A549 (cell line): ENCODE measurements at regions of chr18 and their contacts with region 1.

Region 1: GRCh38 chr18:9673296-9674251 is 34.5 kb upstream of the RAB31 start:
- DNase-seq: peak; percentile 94 to 97
- ATAC-seq: peak; percentile 95 to 99
- H3K4me3 ChIP-seq: peak overlapping the region; percentile 19
- H3K27ac ChIP-seq: peak overlapping the region; percentile 89 to 91
- H3K4me1 ChIP-seq: peaks cover 20% of the 10 kb centered on the region
- CTCF ChIP-seq: peak; percentile 52
- EP300 ChIP-seq: peak in 1 of 2 experiments; percentile 9; a peak in 1 of 5 replicates
- POLR2A ChIP-seq: no peak
- RAD21 ChIP-seq: peak; percentile 73 to 78

Region 2: DNA sequence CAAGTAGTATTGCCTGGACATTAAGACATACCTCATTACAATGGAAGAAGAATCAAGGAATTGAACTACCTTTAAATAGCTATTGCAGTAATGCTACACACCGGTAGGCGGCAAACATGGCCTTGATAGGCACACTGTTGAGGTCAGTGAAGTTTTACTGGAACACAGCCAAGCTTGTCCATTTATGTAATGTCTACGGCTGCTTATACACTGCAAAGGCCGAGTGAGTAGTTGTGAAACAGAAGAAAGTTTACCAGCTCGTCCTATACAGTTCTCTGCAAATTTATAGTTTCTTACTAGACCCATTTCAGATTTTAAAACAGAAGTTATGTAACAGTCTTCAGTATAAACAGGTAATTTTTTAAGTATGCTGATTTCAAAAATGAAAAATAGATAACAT is 98.0 kb before region 1 on chr18:
- CTCF ChIA-PET with region 1: interaction called, 14 read pairs
- POLR2A ChIA-PET with region 1: interaction called, 8 read pairs
- DNase-seq: peak; percentile 44 to 95
- ATAC-seq: peak; percentile 97
- H3K4me3 ChIP-seq: no peak overlapping the region
- H3K27ac ChIP-seq: peak overlapping the region; percentile 12 to 64; a peak in 3 of 6 replicates
- H3K4me1 ChIP-seq: peaks cover 28% of the 10 kb centered on the region
- CTCF ChIP-seq: peak; percentile 64
- EP300 ChIP-seq: no peak
- POLR2A ChIP-seq: no peak
- RAD21 ChIP-seq: peak; percentile 82 to 90

Region 3: DNA sequence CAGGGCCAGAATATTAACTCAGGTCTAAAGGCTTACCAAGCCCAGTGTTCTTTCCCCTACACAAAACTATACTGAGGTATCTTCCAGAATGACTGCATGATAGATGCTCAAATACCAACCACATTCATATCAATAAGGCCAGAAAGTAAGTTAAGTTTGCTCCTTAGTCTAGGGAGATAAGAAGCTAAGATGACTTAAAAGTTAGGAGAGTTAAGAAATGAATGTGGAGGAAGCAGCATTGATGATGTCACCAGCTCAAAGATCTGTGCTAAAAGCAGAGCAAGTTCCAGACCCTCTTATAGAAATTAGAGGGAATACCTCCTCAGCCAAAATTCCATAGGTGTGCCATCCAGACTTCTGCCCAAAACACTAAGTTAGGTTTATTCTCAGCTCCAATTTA is 65.3 kb before region 1 on chr18:
- CTCF ChIA-PET with region 1: interaction called, 22 read pairs
- POLR2A ChIA-PET with region 1: interaction called, 15 read pairs
- DNase-seq: peak in 1 of 2 experiments; percentile 15
- ATAC-seq: no peak
- H3K4me3 ChIP-seq: no peak overlapping the region
- H3K27ac ChIP-seq: peak overlapping the region; percentile 39 to 79; a peak in 4 of 6 replicates
- H3K4me1 ChIP-seq: peaks cover 43% of the 10 kb centered on the region
- CTCF ChIP-seq: no peak
- EP300 ChIP-seq: no peak
- POLR2A ChIP-seq: no peak
- RAD21 ChIP-seq: no peak

Region 4: DNA sequence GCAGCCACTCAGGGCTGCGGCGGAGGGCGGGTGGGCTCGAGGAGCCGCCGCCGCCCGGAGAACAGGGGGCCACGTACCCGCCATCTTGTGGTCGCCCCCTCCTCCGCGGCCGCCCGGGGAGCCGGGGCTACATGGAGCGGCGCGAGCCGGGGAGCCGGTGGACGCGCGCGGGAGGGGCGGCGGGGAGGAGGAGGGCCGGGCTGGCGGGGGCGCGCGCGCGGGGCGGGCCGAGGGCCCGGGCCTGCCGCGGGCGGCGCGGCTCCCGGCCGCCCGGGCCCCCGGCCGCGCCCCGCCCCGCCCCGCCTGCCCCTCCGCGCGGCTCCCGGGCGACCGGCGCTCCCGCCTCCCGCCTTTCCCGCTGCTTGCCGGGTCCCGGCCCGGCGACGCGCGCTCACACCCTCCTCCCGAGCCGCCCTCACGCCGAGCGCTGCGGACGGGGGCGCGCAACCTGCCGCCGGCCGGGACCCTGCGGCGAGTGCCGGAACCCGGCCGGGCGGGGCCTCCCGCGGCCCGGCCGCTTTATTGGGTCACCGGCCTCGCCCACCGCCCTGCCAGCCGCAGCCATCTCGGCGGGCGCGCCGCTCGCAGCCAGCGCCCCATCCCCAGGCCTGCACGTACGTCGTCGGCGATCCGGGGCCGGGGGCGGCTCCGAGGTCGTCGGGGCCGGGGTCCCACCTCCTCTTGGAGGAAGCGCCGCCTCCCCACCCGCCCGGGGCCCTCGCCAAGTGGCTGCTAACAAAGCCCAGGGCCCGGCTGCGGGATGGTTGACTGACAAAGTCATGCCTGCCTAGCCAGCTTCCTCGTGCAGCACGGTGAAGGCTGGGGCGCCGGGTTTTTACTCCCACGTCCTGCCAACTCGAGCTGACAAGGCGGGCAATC is 58.9 kb before region 1 on chr18 and contains the start of gene PPP4R1:
- CTCF ChIA-PET with region 1: interaction called, 22 read pairs
- POLR2A ChIA-PET with region 1: interaction called, 15 read pairs
- DNase-seq: peak; percentile 40 to 67
- ATAC-seq: peak; percentile 56 to 69
- H3K4me3 ChIP-seq: peak within 1 kb of the TSS; percentile 98
- H3K27ac ChIP-seq: peak within 1 kb of the TSS; percentile 100
- H3K4me1 ChIP-seq: peaks cover 47% of the 10 kb centered on the region
- CTCF ChIP-seq: no peak
- EP300 ChIP-seq: no peak
- POLR2A ChIP-seq: peak; percentile 34
- RAD21 ChIP-seq: no peak
- polyA plus RNA-seq, gene PPP4R1: 94.5 and 97.3 TPM in 2 replicates

Region 5: DNA sequence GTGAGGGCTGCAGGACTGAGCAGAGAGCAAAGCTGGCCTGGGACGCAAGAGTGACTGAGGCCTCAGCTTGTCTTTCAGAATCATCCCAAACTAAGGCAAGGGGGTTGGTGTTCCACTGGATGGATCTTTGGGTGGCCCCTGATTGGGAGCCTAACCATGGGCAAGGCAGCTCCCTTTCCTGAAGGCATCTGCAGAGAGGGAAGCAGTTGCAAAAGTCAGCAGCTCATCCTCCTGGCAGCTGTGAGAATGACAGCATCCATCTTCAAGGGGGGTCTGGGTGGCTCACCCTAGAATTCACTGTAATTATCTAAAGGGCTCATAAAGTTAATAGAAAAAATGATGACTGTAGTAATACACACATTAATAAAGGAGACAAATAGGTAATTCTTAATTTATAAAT is 12.0 kb before region 1 on chr18:
- CTCF ChIA-PET with region 1: interaction called, 12 read pairs
- POLR2A ChIA-PET with region 1: no interaction called
- DNase-seq: peak in 1 of 2 experiments; percentile 50
- ATAC-seq: peak; percentile 71 to 79; a peak in 4 of 6 replicates
- H3K4me3 ChIP-seq: no peak overlapping the region
- H3K27ac ChIP-seq: no peak overlapping the region
- H3K4me1 ChIP-seq: no peaks in the 10 kb centered on the region
- CTCF ChIP-seq: peak; percentile 28; the same call in 1 of the 3 replicates
- EP300 ChIP-seq: no peak
- POLR2A ChIP-seq: no peak
- RAD21 ChIP-seq: peak; percentile 51 to 63